ENCODE measurements at regions of chr6 and their contacts with region 1.

Region 1: DNA sequence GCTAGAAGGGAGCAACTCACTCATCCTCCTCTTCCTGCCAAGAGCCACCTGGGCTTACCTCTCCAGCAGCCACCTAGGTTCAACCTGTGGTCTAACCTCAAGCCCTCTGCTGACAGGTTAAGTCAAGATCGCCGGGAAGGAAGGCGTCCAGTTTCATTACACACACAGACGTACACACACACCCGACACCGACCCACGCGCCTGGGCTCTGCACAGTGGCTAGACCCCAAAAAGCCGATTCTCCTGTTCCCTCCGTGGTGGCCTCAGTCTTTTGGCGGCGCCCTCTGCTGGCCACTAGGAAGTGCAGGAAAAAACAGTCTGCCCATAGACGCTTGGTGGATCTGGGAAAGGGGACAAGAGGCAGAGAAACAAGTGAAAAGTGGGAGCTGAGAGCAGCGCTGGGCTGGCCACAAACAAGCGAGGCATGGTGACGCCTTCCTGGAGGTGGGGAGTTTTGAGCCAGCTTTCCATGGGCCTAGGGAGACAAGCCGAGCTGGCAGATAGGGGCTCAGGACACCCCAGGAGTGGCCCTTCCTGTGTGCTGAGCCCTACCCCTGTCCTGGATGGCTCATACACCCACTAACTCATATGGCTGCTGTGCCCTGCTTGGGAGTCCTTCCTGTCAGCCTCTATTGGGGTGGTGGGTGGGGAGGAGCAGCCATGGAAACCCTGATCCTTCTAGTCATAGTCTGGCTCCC is 52.7 kb downstream of the MRPL14 start:
- DNase-seq: peak in 2 of 3 donors; percentile 74
- ATAC-seq: peak; percentile 52
- H3K4me3 ChIP-seq: no peak overlapping the region
- H3K4me1 ChIP-seq: peaks cover 30% of the 10 kb centered on the region
- CTCF ChIP-seq: peak; percentile 87

Region 2: GRCh38 chr6:43667245-43668150 is 407.1 kb before region 1 on chr6:
- intact Hi-C with region 1: loop called (anchors 5 to 10 kb)
- DNase-seq: peak; percentile 88 to 98 (median 96)
- ATAC-seq: peak; percentile 79
- H3K4me3 ChIP-seq: no peak overlapping the region
- H3K4me1 ChIP-seq: peaks cover 27% of the 10 kb centered on the region
- CTCF ChIP-seq: peak; percentile 96

Region 3: GRCh38 chr6:43723737-43724295 is 350.8 kb before region 1 on chr6:
- intact Hi-C with region 1: loop called in 1 of 2 experiments (anchors 5 kb)
- DNase-seq: peak; percentile 82 to 92 (median 83)
- ATAC-seq: peak; percentile 89
- H3K4me3 ChIP-seq: no peak overlapping the region
- H3K4me1 ChIP-seq: peaks cover 13% of the 10 kb centered on the region
- CTCF ChIP-seq: peak; percentile 36

Region 4: DNA sequence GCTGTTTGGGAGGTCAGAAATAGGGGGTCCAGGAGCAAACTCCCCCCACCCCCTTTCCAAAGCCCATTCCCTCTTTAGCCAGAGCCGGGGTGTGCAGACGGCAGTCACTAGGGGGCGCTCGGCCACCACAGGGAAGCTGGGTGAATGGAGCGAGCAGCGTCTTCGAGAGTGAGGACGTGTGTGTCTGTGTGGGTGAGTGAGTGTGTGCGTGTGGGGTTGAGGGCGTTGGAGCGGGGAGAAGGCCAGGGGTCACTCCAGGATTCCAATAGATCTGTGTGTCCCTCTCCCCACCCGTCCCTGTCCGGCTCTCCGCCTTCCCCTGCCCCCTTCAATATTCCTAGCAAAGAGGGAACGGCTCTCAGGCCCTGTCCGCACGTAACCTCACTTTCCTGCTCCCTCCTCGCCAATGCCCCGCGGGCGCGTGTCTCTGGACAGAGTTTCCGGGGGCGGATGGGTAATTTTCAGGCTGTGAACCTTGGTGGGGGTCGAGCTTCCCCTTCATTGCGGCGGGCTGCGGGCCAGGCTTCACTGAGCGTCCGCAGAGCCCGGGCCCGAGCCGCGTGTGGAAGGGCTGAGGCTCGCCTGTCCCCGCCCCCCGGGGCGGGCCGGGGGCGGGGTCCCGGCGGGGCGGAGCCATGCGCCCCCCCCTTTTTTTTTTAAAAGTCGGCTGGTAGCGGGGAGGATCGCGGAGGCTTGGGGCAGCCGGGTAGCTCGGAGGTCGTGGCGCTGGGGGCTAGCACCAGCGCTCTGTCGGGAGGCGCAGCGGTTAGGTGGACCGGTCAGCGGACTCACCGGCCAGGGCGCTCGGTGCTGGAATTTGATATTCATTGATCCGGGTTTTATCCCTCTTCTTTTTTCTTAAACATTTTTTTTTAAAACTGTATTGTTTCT is 304.8 kb before region 1 on chr6 and contains the start of gene VEGFA:
- intact Hi-C with region 1: loop called (anchors 2 to 5 kb)
- DNase-seq: peak; percentile 91 to 95 (median 93)
- ATAC-seq: peak; percentile 68
- H3K4me3 ChIP-seq: peak within 1 kb of the TSS; percentile 81
- H3K4me1 ChIP-seq: peaks cover 34% of the 10 kb centered on the region
- CTCF ChIP-seq: peak; percentile 89
- total RNA-seq, gene VEGFA: 89.4 to 165 (median 94.7) TPM

Measured in mucosa of descending colon (tissue), 3 donors.